Right ventricle myocardium inferior (tissue), 1 donor: ENCODE measurements at regions of chr10 and their contacts with region 1.

Region 1: GRCh38 chr10:60099998-60100747 is 193.8 kb upstream of the CCDC6 start:
- DNase-seq: no peak
- ATAC-seq: peak; percentile 68

Region 2: GRCh38 chr10:59674211-59674836 is 425.8 kb before region 1 on chr10:
- intact Hi-C with region 1: no loop called
- DNase-seq: no peak
- ATAC-seq: no peak

Region 3: GRCh38 chr10:60299961-60300883 is 200.0 kb after region 1 on chr10:
- intact Hi-C with region 1: no loop called
- DNase-seq: no peak
- ATAC-seq: peak; percentile 89

Region 4: DNA sequence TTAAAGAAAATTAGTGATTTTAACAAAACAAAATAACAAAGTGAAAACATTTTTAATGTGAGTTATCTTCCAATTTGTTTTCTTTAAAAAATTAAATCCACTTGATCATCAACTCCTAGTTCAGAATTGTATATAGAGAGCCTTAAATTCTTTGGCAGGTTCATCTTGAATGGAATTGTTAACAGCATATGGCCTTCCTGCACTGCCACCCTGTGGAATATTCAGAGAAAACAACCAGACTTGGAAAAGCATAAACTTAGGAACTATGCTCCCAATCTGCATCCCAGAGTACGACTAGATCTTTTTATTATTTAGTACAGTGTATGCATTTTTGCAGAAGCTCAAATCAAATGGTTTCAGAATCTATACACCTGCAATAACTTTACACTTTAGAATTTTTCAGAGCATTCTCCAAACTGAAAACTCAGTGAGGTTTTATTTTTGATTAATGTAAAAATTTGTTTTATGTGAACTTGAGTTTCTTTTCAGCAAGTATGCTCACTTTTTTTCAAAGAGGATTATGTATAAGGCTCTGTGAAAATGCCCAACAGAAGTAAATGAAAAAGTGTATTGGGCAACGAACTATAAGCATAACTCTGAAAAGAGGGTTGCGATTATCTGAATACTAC is 334.4 kb after region 1 on chr10:
- intact Hi-C with region 1: loop called (anchors 5 kb)
- DNase-seq: no peak
- ATAC-seq: peak; percentile 64

Region 5: DNA sequence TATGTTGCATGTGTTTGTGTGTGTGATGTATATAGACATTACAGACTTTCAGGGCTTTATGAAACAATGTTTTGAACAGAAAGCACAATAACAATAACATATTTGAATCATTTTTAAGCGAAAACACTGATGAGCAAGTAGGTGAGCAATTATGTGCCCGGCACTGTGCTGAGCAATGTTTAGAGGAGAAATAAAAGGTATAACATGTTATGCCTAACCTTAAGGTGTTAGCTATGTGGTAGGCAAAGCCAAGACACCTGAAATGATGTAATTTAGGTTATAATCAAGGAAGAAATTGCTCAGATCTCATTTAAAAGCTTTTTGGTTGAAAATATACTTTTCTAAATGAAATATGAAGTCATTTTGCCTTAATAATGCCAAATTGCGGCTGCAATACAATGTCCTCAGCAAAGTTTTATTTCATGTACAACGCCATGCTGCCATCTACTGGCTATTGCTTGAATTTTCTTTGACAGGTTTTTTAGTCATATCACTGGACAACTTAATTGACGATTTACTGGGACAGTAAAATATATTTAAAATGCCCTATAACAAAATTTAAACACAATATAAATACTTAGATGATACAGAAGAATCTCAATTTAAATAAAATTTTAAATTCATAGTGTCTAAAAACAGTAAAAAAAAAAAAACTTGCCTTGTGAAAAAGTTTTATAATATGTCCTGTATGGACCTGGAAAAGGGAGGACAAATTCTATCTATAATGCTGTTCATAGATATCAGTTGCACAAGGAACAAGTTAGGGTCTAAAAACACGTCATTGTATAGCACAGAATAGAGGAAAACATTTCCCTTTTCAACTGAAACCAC is 547.0 kb after region 1 on chr10:
- intact Hi-C with region 1: loop called (anchors 10 kb)
- DNase-seq: no peak
- ATAC-seq: no peak